ENCODE measurements at regions of chr15 and their contacts with region 1.

Region 1: DNA sequence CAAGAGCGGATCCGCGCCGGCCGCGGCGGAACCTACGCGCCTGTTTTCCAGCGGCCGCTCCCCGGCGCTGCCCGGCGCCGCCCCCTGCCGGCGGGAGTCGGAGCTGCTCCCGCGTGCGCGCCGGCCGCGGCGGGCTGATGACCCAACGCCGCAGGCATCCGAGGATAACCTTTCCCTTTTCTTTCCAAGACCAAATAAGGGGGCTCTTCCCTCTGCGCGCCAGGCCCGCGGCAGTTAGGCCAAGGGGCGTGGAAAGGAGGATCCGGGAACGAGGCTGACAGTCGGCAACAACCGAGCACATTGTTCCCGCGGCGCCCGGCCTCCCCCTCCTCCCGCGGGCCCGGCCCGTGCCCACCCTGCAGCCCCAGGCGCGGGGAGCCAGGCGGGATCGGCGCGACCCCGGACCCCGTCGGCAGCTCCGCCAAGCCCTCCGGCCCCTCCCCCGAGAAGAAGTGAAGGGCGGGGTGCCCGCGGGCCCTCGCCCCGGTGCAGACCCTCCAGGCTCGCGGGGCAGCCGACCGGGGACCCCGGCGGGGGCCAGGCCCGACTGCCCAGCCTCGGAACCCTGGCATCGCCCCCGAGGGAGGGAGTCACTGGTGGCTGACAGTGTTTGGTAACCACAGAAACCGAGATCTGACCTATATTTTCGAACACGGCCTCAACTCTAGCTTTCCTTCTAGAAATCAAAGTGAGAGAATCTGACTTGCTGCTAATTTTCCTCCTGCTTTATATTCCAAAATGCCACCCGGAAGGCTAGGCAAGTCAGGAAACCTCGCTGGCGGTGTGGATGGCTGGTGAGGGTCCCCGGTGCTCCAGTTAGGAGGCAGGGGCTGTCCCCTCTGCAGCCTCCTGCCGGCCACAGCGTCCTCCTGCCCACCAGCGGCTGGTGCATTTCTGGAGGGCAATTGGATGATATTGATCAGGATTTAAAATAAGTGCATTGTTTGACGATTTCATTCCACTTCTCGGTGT is 45.6 kb upstream of the SYNM start:
- DNase-seq: peak; percentile 92

Region 2: DNA sequence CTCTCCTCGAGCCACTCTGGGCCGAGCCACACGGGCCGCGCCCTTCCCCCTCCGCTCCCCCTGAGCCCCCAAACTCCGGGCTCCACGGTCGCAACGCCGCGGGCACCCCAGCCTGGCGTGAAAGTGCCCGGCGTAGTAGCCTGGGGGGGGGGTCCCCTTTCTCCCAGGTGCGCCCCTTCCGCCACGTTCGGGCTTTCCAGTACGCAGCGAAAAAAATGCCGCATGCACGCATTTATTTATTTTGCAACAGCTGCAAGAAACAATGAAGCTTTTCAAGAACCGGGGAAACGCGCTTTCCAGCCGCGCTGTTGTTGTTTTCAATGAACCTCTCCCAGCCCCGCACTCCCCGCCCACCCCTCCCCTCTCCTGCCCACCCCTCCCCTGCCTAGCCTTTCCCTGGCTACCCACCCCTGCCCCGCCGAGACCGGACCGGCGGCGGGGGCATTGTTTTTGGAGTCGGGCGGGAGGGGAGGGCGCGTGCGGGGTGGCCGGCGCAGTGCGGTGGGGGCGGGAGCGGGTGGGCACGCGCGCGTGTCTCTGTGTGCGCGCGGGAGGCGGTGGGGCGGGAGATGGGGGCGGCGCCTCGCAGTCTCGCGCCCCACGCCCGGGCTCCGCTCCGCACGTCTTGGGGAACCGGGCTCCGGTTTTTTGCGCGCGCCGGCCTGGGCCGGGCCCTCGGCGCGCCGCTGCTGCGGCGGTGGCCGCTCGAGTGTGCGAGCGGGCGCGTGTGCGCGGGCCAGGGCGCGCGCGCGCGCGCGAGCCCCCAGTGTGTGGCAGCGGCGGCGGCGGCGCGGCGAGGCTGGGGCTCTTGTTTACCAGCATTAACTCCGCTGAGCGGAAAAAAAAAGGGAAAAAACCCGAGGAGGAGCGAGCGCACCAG is 411.3 kb before region 1 on chr15 and contains the start of gene IGF1R:
- intact Hi-C with region 1: loop called (anchors 5 kb)
- DNase-seq: peak; percentile 95
- total RNA-seq, gene IGF1R: 57.2 TPM

Region 3: DNA sequence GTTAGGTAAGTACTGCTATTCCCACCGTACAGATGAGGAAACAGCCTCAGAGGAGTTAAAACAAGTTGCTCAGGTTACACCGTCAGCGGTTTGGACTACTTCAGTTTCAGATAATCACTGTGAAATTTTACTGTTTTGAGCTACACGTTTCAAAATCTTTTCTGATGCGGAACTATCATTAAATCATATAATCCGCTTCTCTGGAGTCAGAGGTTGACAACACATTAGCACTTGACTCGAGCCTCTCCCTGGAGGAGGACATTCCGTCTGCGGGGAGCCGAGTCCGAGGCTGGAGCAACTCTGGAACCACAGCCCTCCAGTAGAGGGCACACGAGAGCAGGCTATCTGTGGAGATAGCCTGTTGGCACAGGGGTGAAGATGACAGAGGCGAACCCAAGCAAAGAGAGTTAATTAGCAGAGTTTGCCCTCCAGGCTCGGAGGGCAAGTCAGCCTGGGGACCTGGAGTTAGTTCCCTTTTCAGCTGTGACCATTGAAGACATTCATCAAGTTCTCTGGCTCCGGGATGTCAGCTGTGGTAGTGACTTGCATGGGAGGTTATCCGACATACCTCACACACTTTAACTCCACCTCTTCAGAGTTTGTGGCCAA is 279.7 kb before region 1 on chr15:
- intact Hi-C with region 1: loop called (anchors 5 kb)
- DNase-seq: peak; percentile 90

Region 4: GRCh38 chr15:98873441-98874201 is 185.7 kb before region 1 on chr15:
- intact Hi-C with region 1: loop called (anchors 5 kb)
- DNase-seq: no peak

Region 5: GRCh38 chr15:98954411-98954810 is 104.9 kb before region 1 on chr15:
- intact Hi-C with region 1: loop called (anchors 2 kb)
- DNase-seq: no peak